Activated B cell treated with CpG ODN at 0.5 μM for 24 hours (primary cell): ENCODE measurements at regions of chr20 and their contacts with region 1.

Region 1: GRCh38 chr20:62861726-62862336 is at the start of gene TCFL5:
- DNase-seq: peak; percentile 99
- ATAC-seq: peak; percentile 90
- H3K4me3 Mint-ChIP-seq: peak within 1 kb of the TSS; percentile 81
- H3K27ac Mint-ChIP-seq: peak within 1 kb of the TSS; percentile 52
- H3K4me1 Mint-ChIP-seq: peaks cover 41% of the 10 kb centered on the region
- H3K27me3 Mint-ChIP-seq: no peaks in the 10 kb centered on the region
- CTCF ChIP-seq: no peak
- total RNA-seq, gene TCFL5: 54.5 and 55.6 TPM in 2 replicates

Region 2: GRCh38 chr20:62822788-62823651 is 38.8 kb before region 1 on chr20:
- CTCF ChIA-PET with region 1: no interaction called
- POLR2A ChIA-PET with region 1: interaction called, 11 read pairs
- intact Hi-C with region 1: no loop called
- DNase-seq: no peak
- ATAC-seq: peak; percentile 15
- H3K4me3 Mint-ChIP-seq: no peak overlapping the region
- H3K27ac Mint-ChIP-seq: no peak overlapping the region
- H3K4me1 Mint-ChIP-seq: peaks cover 21% of the 10 kb centered on the region
- H3K27me3 Mint-ChIP-seq: peaks cover 8% of the 10 kb centered on the region
- CTCF ChIP-seq: no peak

Region 3: DNA sequence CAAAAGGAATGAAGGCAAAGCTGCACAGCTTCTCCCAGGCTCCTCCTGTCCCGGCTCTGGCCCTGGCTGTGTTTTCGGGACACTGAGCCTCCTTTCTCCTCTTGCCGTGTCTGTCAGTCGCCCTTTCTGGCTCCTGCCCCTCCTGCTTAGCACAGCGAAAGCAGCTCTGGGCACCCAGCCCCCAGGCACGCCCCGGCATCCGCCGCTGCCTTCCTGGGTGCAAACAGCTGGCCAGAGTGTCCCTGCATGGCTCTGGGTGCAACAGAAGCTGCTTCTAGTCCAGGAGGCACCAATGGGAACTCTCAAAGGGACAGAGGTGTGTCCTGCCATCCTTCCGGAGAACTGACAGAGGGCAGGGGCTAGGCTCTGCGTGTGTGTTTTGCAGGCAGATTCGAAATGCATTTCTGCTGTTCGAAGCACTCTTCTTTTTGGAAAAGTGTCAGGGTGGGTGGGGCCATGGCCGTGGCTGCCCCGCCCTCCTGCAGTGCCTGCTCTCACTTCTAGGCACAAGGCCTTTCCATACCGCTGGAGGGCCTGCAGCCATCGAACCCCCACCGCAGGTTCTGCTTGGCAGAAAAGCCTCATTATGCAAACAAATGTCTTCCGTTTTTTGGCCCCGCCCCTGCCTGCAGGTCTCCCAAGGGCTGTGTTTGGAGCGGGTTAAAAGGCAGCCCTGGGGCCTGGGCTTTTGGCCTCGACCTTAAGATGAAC is 29.5 kb before region 1 on chr20:
- CTCF ChIA-PET with region 1: no interaction called
- POLR2A ChIA-PET with region 1: interaction called, 5 read pairs
- intact Hi-C with region 1: loop called (anchors 2 kb)
- DNase-seq: peak; percentile 59
- ATAC-seq: peak; percentile 90
- H3K4me3 Mint-ChIP-seq: peak overlapping the region; percentile 84
- H3K27ac Mint-ChIP-seq: peak overlapping the region; percentile 67
- H3K4me1 Mint-ChIP-seq: peaks cover 42% of the 10 kb centered on the region
- H3K27me3 Mint-ChIP-seq: no peaks in the 10 kb centered on the region
- CTCF ChIP-seq: no peak